IMR-90 (cell line): ENCODE measurements at regions of chr3 and their contacts with region 1.

Region 1: DNA sequence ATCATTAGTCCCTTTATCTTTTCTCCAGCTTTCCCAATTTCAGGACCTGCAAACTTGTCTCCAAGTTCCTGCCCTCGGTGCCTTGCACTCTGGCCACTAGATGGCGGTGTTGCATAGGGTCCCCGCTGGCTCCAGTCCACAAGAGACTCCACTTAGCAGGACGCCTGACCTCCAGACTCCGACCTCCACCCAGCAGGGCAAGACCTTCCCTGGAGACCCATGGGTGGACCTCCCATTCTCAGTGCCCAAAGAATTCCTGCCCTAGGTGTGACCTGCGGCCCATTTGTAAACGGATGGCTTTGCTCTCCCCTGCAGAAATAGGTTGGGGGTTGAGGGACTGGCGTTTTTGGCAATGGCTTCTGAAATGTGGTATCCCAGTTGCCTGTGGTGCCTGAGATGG is 82.6 kb downstream of the LSM3 start:
- DNase-seq: peak; percentile 77
- ATAC-seq: peak; percentile 75
- H3K4me3 ChIP-seq: no peak overlapping the region
- H3K27ac ChIP-seq: no peak overlapping the region
- H3K4me1 ChIP-seq: peaks cover 21% of the 10 kb centered on the region
- H3K27me3 ChIP-seq: no peaks in the 10 kb centered on the region
- CTCF ChIP-seq: peak; percentile 97
- POLR2A ChIP-seq: 0 out of 2 replicates have a peak, but pooled peaks have one; percentile 44
- RAD21 ChIP-seq: peak; percentile 97

Region 2: DNA sequence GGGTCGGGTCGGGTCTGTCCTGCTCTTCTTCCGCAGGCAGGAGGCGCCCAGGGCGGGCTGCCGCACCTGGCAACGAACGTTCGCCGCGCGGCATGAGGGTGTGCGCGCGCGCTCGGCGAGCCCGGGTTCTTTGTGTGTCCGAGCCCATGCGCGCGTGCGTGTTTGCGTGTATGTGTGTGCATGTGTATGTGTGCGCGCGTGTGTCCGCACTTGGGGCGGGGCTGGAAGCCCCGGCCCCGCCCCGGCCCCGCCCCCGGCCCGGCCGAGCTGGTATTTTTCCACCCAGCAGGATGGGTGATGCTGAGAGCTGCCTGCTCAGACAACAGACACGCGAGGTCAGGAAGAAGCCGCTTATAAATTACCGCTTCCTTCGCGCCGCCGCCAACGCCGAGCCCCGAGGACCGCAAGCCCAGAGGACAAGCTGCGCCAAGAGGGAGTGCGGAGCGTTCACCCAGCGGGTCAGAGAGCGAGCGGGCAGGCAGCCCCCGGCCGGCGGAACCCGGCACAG is 141.1 kb after region 1 on chr3 and contains the start of gene SLC6A6:
- CTCF ChIA-PET with region 1: no interaction called
- POLR2A ChIA-PET with region 1: no interaction called
- dilution Hi-C with region 1: no loop called
- in situ Hi-C with region 1: no loop called
- intact Hi-C with region 1: loop called (anchors 2 kb)
- DNase-seq: peak; percentile 93
- ATAC-seq: peak; percentile 84
- H3K4me3 ChIP-seq: peak within 1 kb of the TSS; percentile 73
- H3K27ac ChIP-seq: peak within 1 kb of the TSS; percentile 80
- H3K4me1 ChIP-seq: peaks cover 19% of the 10 kb centered on the region
- H3K27me3 ChIP-seq: no peaks in the 10 kb centered on the region
- CTCF ChIP-seq: peak; percentile 36
- POLR2A ChIP-seq: peak; percentile 87
- RAD21 ChIP-seq: peak; percentile 39
- total RNA-seq, gene SLC6A6: 29.9 and 32.5 TPM in 2 replicates

Region 3: DNA sequence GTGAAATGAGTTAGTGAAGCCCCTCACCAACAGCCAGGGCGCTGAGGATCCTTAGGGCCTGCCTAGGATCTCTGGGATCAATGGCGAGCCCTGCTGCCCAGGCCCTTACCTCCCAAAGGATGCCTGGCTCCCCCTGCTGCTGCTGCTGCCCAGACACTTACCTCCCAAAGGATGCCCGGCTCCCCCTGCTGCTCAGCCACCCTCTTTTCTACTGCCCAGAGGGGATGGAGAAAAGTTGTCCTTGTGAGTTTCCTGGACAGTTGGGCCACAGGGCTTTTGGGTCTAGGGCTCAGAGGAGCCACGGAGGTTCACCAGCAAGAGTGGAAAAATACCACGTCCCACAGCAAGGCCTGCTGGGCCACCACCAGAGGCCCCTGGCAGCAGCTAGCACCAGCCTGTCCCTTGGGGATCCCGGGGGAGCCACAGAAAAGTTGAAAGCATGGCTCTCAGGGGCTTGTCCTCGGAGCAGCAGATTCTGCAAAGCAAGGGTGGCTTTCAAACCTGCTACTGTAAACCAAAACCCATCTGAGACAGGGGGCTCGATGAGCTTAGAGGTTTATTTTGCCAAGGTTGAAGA is 200.6 kb after region 1 on chr3:
- CTCF ChIA-PET with region 1: interaction called, 3 read pairs
- POLR2A ChIA-PET with region 1: no interaction called
- dilution Hi-C with region 1: no loop called
- in situ Hi-C with region 1: loop called (anchors 5 kb)
- intact Hi-C with region 1: loop called (anchors 1 kb)
- DNase-seq: peak; percentile 73
- ATAC-seq: peak; percentile 61
- H3K4me3 ChIP-seq: no peak overlapping the region
- H3K27ac ChIP-seq: peak overlapping the region; percentile 21; the same call in 1 of the 2 replicates
- H3K4me1 ChIP-seq: peaks cover 11% of the 10 kb centered on the region; the same call in 1 of the 2 replicates
- H3K27me3 ChIP-seq: no peaks in the 10 kb centered on the region
- CTCF ChIP-seq: peak; percentile 98
- POLR2A ChIP-seq: no peak
- RAD21 ChIP-seq: peak; percentile 88

Region 4: DNA sequence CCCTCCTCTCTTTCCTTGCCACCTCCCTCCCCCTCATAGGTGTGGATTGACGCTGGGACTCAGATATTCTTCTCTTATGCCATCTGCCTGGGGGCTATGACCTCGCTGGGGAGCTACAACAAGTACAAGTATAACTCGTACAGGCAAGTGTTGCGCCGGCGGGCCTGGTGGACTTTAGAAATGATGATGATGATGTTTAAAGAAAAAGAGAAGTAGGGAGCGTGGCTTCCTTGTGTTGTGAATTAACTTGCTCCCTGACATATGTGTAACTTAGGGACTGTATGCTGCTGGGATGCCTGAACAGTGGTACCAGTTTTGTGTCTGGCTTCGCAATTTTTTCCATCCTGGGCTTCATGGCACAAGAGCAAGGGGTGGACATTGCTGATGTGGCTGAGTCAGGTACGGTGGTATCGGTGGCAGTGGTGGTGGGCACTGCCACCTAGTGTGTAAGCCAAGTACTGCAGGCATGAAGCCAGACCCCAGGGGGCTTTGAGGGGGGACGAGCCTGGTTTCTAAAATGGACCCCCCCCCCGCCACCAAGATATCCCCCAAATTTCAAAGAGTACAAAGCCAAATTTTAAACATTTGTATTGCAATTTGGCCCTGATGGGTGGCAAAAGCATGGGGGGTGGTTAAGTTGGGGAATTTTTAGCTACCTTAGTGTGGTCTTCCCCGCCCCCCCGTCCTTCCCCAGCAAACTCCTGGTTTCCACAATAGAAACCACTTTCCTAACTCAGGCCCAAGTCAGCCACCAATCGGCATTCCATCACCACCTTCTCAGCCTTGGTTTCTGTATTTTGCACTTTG is 206.8 kb after region 1 on chr3:
- CTCF ChIA-PET with region 1: interaction called, 4 read pairs
- POLR2A ChIA-PET with region 1: no interaction called
- dilution Hi-C with region 1: no loop called
- in situ Hi-C with region 1: loop called (anchors 5 kb)
- intact Hi-C with region 1: loop called (anchors 1 kb)
- DNase-seq: peak; percentile 46
- ATAC-seq: peak; percentile 64
- H3K4me3 ChIP-seq: no peak overlapping the region
- H3K27ac ChIP-seq: no peak overlapping the region
- H3K4me1 ChIP-seq: peaks cover 12% of the 10 kb centered on the region
- H3K27me3 ChIP-seq: no peaks in the 10 kb centered on the region
- CTCF ChIP-seq: peak; percentile 81
- POLR2A ChIP-seq: no peak
- RAD21 ChIP-seq: peak; percentile 91

Region 5: DNA sequence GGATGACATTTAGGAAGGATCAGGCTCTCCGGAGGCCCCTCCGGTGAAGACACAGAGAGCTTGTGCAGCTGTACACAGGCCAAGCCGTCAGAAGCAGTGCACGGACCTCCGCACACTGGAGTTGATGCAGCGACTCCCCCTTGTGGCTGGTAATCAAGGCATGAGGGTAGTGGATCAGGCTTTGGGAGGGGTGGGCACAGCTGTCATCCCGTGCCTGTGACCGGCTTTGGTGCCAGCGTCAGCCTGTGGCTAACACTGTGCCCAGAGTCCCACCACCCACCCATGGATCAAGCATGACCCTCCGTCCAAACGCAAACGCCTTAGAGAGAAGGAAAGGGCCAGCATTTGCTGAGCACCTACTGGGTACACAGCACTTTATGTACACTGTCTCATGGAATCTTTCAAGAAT is 287.1 kb after region 1 on chr3:
- CTCF ChIA-PET with region 1: no interaction called
- POLR2A ChIA-PET with region 1: no interaction called
- dilution Hi-C with region 1: no loop called
- in situ Hi-C with region 1: no loop called
- intact Hi-C with region 1: loop called (anchors 1 kb)
- DNase-seq: peak; percentile 56
- ATAC-seq: peak; percentile 92
- H3K4me3 ChIP-seq: no peak overlapping the region
- H3K27ac ChIP-seq: no peak overlapping the region
- H3K4me1 ChIP-seq: no peaks in the 10 kb centered on the region
- H3K27me3 ChIP-seq: peaks cover 33% of the 10 kb centered on the region
- CTCF ChIP-seq: peak; percentile 70
- POLR2A ChIP-seq: no peak
- RAD21 ChIP-seq: peak; percentile 75

Region 6: DNA sequence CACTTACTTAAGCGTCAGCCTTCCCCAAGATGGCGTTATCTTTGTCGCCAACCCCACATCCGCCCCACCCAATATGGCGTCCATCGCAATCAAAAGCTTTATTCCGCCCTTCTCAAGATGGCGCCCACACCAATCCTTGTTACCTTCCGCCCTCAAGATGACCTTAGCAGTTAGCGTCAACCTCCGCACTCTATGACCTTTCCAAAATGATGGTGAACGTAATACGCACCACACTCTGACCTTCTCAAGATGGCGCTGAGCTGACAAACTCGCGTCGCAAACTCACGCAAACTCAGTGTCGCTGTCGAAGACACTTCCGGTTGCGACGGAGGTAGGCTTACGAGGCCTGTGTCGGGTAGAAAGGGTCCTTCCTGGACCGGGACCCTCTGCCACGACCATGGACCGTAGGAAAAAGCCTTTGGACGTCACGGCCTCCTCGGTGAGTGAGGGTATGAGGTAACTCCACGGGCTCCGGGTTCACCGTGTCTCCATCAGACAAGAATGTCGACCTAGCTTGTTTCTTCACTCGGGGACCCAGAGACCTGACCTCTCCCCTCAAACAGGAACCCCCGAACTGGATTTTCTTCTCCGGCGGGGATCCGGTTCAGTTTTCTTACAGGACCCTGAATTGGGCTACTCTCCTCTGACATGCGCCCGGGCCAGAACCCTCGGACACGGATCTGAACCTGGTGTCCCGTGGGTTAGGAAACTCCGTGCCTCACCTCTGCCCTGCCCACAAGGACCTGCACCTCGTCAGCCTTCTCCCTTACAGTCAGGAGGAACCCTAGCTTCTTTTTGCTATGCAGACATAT is 390.4 kb after region 1 on chr3 and contains the start of gene CCDC174:
- CTCF ChIA-PET with region 1: no interaction called
- POLR2A ChIA-PET with region 1: no interaction called
- dilution Hi-C with region 1: no loop called
- in situ Hi-C with region 1: no loop called
- intact Hi-C with region 1: loop called (anchors 2 kb)
- DNase-seq: peak; percentile 99
- ATAC-seq: peak; percentile 100
- H3K4me3 ChIP-seq: peak within 1 kb of the TSS; percentile 62
- H3K27ac ChIP-seq: peak within 1 kb of the TSS; percentile 85
- H3K4me1 ChIP-seq: no peaks in the 10 kb centered on the region
- H3K27me3 ChIP-seq: no peaks in the 10 kb centered on the region
- CTCF ChIP-seq: 0 out of 2 replicates have a peak, but pooled peaks have one; percentile 5
- POLR2A ChIP-seq: peak; percentile 91
- RAD21 ChIP-seq: no peak
- total RNA-seq, gene CCDC174: 5.9 and 6.9 TPM in 2 replicates